ENCODE measurements at regions of chr11 and their contacts with region 1.

Region 1: GRCh38 chr11:17354601-17354991 is 3.0 kb downstream of the NCR3LG1 start:
- DNase-seq: peak; percentile 69
- CTCF ChIP-seq: peak; percentile 60

Region 2: DNA sequence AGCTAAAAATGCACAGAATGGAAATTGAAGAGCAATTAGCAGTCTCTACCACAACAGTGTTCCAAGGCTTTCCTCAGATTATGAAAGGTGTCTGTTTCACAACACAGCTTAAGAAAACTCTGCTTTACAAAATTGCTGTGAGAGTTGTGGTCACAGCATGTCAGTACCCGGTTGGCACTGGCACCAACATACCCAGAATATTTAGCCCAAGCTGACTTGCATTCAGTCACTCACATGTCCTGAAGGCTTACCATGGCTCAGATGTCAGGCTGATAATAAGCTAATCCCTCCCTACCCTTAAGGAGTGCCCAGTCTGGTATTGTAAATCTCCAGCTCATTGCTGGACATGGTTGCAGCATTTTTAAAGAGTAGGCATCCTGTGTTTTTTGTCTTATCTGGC is 11.9 kb after region 1 on chr11:
- CTCF ChIA-PET with region 1: interaction called, 27 read pairs
- POLR2A ChIA-PET with region 1: no interaction called
- DNase-seq: no peak
- CTCF ChIP-seq: no peak

Measured in GM10248 (cell line).